OCI-LY7 (cell line): ENCODE measurements at regions of chr3 and their contacts with region 1.

Region 1: DNA sequence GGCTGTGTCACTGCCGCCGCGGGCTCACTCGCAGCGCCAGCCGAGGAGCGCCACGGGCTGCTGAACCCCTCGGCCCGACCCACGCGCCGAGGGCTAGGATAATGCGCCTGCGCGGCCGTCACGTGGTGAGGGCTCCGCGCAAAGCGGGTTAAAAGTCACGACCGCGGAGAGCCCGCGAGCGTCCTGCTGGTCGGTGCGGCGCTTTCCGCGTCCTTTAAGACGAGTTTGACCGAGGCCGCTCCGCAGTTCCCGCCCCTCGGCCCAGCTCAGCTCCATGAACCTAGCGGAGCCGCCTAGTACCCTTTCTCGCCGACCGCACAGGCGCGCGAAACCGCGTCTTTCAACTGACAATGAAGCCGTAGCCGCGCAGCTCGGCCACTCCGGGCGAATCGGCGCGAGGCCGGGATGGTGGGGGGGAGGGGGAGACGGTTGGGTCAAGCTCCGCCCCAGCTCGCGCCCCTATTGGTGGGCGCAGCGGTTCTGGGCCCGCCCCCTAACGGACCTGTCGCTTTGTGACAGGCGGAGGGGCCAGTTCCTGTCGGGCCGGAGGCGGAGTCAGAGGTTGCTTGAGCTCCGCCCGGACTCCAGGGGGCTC is 636 bp upstream of the STT3B start:
- DNase-seq: peak; percentile 99
- H3K4me3 ChIP-seq: peak overlapping the region; percentile 94
- H3K27ac ChIP-seq: peak overlapping the region; percentile 92
- H3K4me1 ChIP-seq: peaks cover 18% of the 10 kb centered on the region
- CTCF ChIP-seq: no peak; the same call in 1 of the 2 replicates

Region 2: DNA sequence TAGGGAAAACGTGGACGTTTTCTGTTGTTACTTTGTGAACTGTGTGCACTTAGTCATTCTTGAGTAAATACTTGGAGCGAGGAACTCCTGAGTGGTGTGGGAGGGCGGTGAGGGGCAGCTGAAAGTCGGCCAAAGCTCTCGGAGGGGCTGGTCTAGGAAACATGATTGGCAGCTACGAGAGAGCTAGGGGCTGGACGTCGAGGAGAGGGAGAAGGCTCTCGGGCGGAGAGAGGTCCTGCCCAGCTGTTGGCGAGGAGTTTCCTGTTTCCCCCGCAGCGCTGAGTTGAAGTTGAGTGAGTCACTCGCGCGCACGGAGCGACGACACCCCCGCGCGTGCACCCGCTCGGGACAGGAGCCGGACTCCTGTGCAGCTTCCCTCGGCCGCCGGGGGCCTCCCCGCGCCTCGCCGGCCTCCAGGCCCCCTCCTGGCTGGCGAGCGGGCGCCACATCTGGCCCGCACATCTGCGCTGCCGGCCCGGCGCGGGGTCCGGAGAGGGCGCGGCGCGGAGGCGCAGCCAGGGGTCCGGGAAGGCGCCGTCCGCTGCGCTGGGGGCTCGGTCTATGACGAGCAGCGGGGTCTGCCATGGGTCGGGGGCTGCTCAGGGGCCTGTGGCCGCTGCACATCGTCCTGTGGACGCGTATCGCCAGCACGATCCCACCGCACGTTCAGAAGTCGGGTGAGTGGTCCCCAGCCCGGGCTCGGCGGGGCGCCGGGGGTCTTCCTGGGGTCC is 925.6 kb before region 1 on chr3 and contains the start of gene TGFBR2:
- CTCF ChIA-PET with region 1: no interaction called
- POLR2A ChIA-PET with region 1: interaction called, 4 read pairs
- intact Hi-C with region 1: loop called (anchors 5 kb)
- DNase-seq: peak; percentile 91
- H3K4me3 ChIP-seq: peak within 1 kb of the TSS; percentile 94
- H3K27ac ChIP-seq: peak within 1 kb of the TSS; percentile 93
- H3K4me1 ChIP-seq: peaks cover 72% of the 10 kb centered on the region
- CTCF ChIP-seq: no peak; the same call in 1 of the 2 replicates
- total RNA-seq, gene TGFBR2: 28.1 and 29.6 TPM in 2 replicates

Region 3: DNA sequence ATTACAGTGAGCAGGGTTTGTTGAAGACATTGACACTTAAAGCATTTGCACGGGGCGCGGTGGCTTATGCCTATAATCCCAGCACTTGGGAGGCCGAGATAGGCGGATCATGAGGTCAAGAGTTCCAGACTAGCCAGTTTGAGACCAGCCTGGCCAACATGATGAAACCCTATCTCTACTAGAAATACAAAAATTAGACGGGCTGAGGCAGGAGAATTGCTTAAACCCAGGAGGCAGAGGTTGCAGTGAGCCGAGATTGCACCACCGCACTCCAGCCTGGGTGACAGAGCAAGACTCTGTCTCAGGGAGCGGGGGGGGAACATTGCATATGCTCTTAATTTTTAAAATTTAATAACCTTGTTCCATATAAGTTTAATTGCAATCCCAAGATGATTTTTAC is 12.5 kb after region 1 on chr3:
- CTCF ChIA-PET with region 1: no interaction called
- POLR2A ChIA-PET with region 1: interaction called, 18 read pairs
- intact Hi-C with region 1: no loop called
- DNase-seq: no peak
- H3K4me3 ChIP-seq: no peak overlapping the region
- H3K27ac ChIP-seq: no peak overlapping the region
- H3K4me1 ChIP-seq: peaks cover 14% of the 10 kb centered on the region
- CTCF ChIP-seq: no peak

Region 4: DNA sequence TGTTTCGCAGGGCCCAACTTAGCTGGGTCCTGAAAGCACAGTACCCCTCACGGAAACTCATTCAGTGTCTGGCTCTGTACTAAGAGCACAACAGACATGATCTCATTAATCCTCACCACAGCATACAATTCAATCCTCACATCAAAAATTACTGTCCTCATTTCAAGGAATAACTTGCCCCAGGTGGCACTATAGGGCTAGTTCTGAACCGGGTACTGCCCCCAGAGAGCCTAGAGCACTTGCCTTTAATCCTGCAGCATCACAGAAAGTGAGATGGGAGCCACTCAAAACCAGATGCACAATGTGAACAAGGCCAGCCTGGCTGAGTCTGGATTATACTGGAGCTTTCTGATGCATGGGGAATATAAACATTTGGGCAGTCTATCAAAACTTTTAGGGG is 326.4 kb after region 1 on chr3:
- CTCF ChIA-PET with region 1: no interaction called
- POLR2A ChIA-PET with region 1: no interaction called
- intact Hi-C with region 1: loop called (anchors 5 kb)
- DNase-seq: peak; percentile 74
- H3K4me3 ChIP-seq: no peak overlapping the region
- H3K27ac ChIP-seq: peak overlapping the region; percentile 53
- H3K4me1 ChIP-seq: peaks cover 95% of the 10 kb centered on the region
- CTCF ChIP-seq: peak; percentile 72

Region 5: DNA sequence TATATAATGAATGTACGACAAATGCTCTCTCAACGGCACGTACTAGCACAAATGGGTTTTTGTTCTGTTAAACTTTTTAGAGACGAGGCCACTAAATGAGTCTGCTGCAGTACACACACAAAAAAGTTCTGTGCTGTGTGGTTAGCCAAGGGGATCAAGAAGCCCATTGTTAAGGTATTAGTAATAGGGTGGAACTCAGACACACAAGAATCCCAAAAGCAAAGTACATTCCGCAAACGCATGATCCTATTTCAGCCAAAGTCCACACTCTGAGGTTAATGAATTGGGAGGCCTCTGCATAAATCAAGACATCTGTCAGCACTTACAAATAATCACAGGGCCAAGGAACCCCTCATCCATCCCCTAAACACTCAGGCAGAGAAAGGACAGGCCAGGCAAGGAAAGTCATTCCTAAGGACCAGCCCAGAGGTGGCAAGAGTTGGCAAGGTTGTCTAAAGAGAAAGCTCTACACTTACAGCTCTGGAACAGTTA is 436.9 kb after region 1 on chr3:
- CTCF ChIA-PET with region 1: interaction called, 3 read pairs
- POLR2A ChIA-PET with region 1: interaction called, 10 read pairs
- intact Hi-C with region 1: no loop called
- DNase-seq: no peak
- H3K4me3 ChIP-seq: peak overlapping the region; percentile 91
- H3K27ac ChIP-seq: peak overlapping the region; percentile 88
- H3K4me1 ChIP-seq: peaks cover 88% of the 10 kb centered on the region
- CTCF ChIP-seq: no peak

Region 6: DNA sequence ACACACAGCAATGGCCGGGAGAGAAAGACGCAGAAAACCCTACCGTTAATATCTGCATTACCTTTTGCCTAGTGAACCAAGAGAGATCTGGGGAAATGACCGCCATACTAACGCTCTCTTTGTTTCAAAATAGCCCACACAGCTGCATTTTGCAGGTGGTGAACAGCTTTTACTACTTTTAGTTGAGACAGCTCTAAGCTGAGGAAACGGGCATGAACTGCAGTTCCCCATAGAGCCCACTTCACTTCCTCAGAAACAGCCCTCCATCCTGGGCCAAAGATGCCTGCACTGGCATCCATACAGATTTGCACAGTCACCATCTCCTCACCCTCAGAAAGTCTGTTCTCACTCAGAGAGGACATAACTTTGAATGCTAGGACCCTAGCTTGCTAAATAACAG is 494.5 kb after region 1 on chr3:
- CTCF ChIA-PET with region 1: no interaction called
- POLR2A ChIA-PET with region 1: interaction called, 9 read pairs
- intact Hi-C with region 1: loop called (anchors 5 kb)
- DNase-seq: peak; percentile 98
- H3K4me3 ChIP-seq: peak overlapping the region; percentile 42
- H3K27ac ChIP-seq: peak overlapping the region; percentile 100
- H3K4me1 ChIP-seq: peaks cover 61% of the 10 kb centered on the region
- CTCF ChIP-seq: no peak

Region 7: GRCh38 chr3:32438596-32439344 is 906.7 kb after region 1 on chr3:
- CTCF ChIA-PET with region 1: no interaction called
- POLR2A ChIA-PET with region 1: no interaction called
- intact Hi-C with region 1: loop called (anchors 10 kb)
- DNase-seq: peak; percentile 86
- H3K4me3 ChIP-seq: peak overlapping the region; percentile 35
- H3K27ac ChIP-seq: peak overlapping the region; percentile 75
- H3K4me1 ChIP-seq: peaks cover 85% of the 10 kb centered on the region
- CTCF ChIP-seq: no peak